ENCODE measurements at regions of chr1 and their contacts with region 1.

Region 1: DNA sequence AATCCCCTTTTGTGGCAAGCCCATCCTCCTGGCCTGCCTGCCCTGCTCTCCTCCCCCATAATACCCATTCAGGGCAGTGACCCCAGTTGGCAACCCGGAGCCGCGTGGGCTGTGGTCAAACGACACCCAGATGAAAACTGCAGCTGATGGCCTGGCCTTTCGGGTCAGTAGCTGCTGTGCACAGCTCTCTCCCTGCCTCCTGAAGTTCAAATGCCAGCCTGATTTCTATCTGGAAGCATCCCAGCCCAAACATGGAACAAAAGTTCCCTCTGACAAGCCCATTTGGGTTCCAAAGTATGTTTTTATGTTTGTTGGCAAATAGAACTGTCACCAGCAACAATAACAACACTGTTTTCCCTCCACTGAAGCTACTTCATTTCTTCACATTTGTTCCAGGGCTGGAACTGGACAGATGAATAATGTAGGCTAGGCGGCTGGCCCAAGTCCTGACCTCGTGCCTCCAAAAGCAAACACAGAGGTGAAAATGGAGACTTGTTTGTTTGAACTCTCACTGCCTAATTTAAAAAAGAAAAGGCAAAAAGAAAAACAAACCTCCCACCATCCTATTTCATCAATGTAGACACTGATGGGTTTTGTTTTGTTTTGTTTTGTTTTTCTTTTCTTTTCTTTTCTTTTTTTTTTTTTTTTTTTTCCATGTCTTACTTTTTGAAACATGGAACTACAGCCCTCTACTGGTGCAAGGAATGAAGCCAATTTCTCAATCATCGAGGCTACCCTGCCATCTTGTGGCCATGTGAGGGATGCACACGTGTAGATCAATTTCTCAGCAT is 179.0 kb downstream of the ADSS2 start:
- DNase-seq: peak; percentile 30 to 64
- ATAC-seq: peak; percentile 90

Region 2: DNA sequence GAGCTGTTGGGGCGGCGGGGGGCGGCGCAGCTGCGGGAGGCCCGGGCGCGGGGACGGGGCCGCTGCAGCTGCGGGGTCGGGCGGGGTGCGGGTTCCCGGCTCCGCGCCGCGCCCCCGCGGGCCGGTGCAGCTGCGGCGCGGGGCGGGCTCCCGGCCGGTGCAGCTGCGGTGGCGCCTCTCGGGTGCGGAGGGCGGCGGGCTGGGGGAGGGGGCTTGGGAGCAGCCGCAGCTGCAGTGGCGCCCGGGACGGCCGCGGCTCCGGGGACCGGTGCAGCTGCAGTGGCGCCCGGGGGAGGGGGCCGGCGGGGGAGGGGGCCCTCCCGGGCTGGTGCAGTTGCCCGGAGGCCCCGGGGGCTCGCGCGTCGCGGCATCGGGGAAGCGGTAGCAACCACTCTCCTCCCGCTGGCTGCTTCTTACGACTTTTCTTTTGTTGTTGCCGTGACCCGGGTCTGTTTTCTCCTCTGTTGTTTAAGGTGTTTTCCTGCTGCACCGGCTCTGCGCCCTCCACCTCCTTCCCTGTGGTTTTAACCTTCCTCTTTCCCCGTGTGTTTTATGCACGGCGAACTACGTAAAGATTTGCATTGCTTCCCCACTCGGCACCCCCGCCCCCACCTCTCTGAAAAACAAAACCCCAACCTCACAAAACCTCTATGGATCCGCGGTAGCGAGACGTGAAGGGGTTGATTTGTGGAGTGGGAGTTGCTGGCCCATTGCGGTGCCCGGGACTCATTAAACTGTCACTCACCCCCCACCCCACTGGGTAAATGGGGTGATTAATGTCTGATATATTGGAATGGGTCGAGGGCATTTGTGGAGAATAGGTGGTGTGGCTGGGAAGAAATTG is 223.3 kb before region 1 on chr1:
- intact Hi-C with region 1: loop called in 1 of 2 experiments (anchors 10 kb)
- DNase-seq: peak; percentile 40 to 66
- ATAC-seq: no peak